Pancreas (tissue), 10 donors: ENCODE measurements at regions of chr4 and their contacts with region 1.

Region 1: DNA sequence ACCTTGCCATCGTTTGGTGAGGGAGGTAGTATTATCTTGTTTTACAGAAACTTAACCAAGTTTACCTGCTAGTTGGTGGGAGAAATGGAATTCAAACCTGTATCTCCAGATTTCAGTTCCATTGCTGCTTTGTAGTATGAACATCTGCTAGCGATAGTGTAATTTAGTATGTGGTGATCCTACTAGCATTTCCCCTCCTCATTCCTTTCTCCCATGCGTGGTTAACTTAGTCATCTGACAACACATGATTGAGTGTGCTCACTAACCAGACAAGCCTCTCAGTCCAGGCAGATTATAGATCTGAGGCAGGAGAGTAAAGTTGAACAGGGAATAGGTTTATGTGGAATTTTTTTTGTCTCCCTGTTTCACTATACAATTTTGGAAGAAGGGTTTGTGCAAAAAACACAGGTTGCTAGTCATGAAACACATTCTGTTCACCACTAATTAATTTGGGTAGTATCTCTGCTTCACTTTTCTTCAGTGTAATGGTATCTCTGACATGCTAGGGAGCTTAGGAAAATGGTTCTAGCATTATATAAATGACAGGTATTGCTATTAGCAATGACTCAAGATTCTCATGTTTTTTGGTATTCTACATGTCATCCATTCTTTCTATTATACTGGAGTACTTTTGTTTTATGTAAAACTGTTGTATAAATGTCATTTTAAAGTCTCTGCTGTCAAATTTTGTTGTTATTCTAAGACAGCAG is 21.7 kb downstream of the RBPJ start:
- DNase-seq: no peak
- ATAC-seq: peak in 3 of 4 donors; percentile 67 to 75 (median 69)
- H3K4me3 ChIP-seq: no peak overlapping the region
- H3K27ac ChIP-seq: no peak overlapping the region
- H3K4me1 ChIP-seq: peaks cover 0 to 17% (median 0%) of the 10 kb centered on the region in 3 donors
- H3K27me3 ChIP-seq: no peaks in the 10 kb centered on the region
- CTCF ChIP-seq: no peak

Region 2: GRCh38 chr4:26397086-26397485 is 54.6 kb after region 1 on chr4:
- intact Hi-C with region 1: loop called in 1 of 3 experiments (anchors 10 kb)
- DNase-seq: no peak
- ATAC-seq: no peak
- H3K4me3 ChIP-seq: no peak overlapping the region
- H3K27ac ChIP-seq: no peak overlapping the region
- H3K4me1 ChIP-seq: peaks cover 0 to 5% (median 0%) of the 10 kb centered on the region in 3 donors
- H3K27me3 ChIP-seq: no peaks in the 10 kb centered on the region
- CTCF ChIP-seq: no peak